ENCODE measurements at regions of chr16 and their contacts with region 1.

Region 1: DNA sequence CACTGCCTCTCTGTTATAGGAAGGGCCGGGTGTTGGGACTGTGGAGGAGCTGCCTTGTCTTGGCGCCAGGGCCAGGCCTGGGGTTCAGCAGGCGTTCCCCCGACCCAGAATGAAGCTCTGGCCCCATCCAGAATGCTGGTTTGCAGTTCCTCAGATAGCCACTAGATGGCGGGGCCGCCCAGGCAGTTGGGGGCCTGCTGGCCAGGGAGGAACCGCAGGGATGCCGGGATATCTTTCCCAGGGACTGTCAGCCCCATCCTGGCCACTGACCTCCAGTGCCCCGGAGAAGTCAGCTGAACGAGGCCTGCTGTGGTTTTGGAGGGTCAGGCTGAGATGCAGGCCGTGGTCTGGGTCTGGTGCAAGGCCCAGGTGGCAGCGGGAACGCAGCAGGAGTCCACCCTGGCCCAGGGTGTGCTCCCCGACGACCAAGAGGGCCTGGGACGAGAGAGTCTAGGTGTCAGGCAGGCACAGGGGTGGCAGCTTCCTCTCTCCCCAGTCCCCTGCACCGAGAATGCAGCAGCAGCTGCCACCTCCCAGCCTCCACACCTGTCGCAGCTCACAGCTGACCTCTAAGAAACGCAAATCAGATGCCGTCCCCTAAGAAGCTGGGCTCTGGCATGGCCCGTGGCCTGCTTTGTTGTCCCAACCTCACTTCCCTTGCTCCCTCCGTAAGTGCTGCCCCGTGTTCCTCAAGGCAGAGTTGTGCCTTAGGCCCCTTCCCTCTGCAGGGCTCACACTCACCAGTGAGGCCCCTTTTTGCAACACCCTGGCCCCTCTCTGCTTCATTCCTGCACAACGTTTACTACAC is 51.2 kb downstream of the RMI2 start:
- DNase-seq: peak; percentile 76
- H3K4me3 Mint-ChIP-seq: no peak overlapping the region
- H3K27ac Mint-ChIP-seq: no peak overlapping the region
- H3K4me1 Mint-ChIP-seq: no peaks in the 10 kb centered on the region
- H3K27me3 Mint-ChIP-seq: no peaks in the 10 kb centered on the region

Region 2: GRCh38 chr16:10957771-10958486 is 438.5 kb before region 1 on chr16:
- CTCF ChIA-PET with region 1: interaction called, 10 read pairs
- POLR2A ChIA-PET with region 1: no interaction called
- intact Hi-C with region 1: no loop called
- DNase-seq: peak; percentile 65
- H3K4me3 Mint-ChIP-seq: peak overlapping the region; percentile 7
- H3K27ac Mint-ChIP-seq: peak overlapping the region; percentile 87
- H3K4me1 Mint-ChIP-seq: peaks cover 73% of the 10 kb centered on the region
- H3K27me3 Mint-ChIP-seq: no peaks in the 10 kb centered on the region

Measured in activated CD4-positive, alpha-beta memory T cell treated with anti-CD3 and anti-CD28 coated beads for 36 hours (primary cell).